Activated CD4-positive, alpha-beta T cell treated with anti-CD3 and anti-CD28 coated beads for 36 hours (primary cell): ENCODE measurements at regions of chr17 and their contacts with region 1.

Region 1: DNA sequence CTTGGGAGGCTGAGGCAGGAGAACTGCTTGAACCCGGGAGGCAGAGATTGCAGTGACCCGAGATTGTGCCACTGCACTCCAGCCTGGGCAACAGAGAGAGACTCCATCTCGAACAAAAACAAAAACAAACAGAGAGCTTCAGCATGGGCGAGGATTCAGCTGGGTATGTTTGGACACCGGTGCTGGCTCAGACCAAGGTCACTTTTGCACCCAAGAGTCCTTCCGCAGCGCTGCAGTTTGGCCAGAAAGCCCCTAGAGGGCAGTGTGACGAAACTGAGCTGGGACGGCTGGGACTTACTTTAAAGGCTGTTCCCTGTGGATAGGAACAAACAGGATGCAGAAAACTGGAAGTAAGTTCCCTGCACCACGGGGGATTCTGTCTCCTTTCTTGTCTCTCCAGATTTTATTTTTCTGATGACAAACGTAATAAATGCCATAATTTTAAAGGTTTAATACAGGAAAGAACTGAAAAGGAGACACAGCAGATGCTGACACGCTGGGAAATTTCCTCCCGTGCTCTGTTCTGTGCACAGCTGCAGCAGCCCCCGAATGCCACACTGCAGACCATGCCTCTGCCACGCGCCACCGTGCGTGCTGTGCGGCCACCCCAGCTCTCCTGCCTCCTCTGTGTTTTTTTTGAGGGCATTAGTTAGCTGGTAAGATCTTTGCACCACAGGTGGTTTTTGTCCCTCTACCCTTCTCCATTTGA is 25.2 kb upstream of the USP36 start:
- DNase-seq: peak; percentile 81
- ATAC-seq: peak; percentile 75
- H3K4me3 Mint-ChIP-seq: no peak overlapping the region
- H3K27ac Mint-ChIP-seq: no peak overlapping the region
- H3K4me1 Mint-ChIP-seq: peaks cover 3% of the 10 kb centered on the region
- H3K27me3 Mint-ChIP-seq: no peaks in the 10 kb centered on the region

Region 2: GRCh38 chr17:78852709-78853121 is 13.1 kb before region 1 on chr17:
- CTCF ChIA-PET with region 1: interaction called, 13 read pairs
- POLR2A ChIA-PET with region 1: no interaction called
- intact Hi-C with region 1: no loop called
- DNase-seq: no peak
- ATAC-seq: no peak
- H3K4me3 Mint-ChIP-seq: no peak overlapping the region
- H3K27ac Mint-ChIP-seq: no peak overlapping the region
- H3K4me1 Mint-ChIP-seq: no peaks in the 10 kb centered on the region
- H3K27me3 Mint-ChIP-seq: no peaks in the 10 kb centered on the region

Region 3: DNA sequence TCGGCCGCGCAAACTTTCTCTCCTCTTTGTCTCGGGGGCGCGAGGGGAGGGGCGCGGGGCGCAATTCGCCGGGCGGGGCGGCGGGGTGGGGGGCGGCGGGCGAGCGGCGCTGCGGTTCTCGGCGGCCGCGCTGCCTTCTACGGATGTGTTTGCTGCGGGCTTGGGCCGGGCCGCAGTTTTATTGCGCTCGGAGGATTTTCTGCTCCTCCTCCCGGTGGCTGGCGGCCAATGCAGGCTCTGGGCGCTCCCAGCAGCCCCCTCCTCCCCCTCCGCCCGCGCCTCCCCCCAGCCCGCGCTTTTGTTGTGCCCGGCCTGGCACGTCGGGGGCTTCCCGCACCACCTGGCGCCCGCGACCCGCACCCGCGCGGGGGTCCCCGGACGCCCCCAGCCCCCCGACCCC is 59.4 kb after region 1 on chr17 and contains the start of gene TIMP2:
- CTCF ChIA-PET with region 1: interaction called, 5 read pairs
- POLR2A ChIA-PET with region 1: no interaction called
- intact Hi-C with region 1: loop called (anchors 2 kb)
- DNase-seq: peak; percentile 83
- ATAC-seq: peak; percentile 86
- H3K4me3 Mint-ChIP-seq: peak within 1 kb of the TSS; percentile 45
- H3K27ac Mint-ChIP-seq: no peak within 1 kb of the TSS
- H3K4me1 Mint-ChIP-seq: peaks cover 9% of the 10 kb centered on the region
- H3K27me3 Mint-ChIP-seq: peaks cover 4% of the 10 kb centered on the region
- total RNA-seq, gene TIMP2: 1.6 to 1.9 TPM

Region 4: GRCh38 chr17:78970834-78971773 is 105.3 kb after region 1 on chr17:
- CTCF ChIA-PET with region 1: interaction called, 37 read pairs
- POLR2A ChIA-PET with region 1: interaction called, 5 read pairs
- intact Hi-C with region 1: loop called (anchors 1 kb)
- DNase-seq: peak; percentile 89
- ATAC-seq: peak; percentile 80
- H3K4me3 Mint-ChIP-seq: no peak overlapping the region
- H3K27ac Mint-ChIP-seq: peak overlapping the region; percentile 17
- H3K4me1 Mint-ChIP-seq: peaks cover 9% of the 10 kb centered on the region
- H3K27me3 Mint-ChIP-seq: no peaks in the 10 kb centered on the region